Dendritic cell treated with granulocyte-macrophage colony-stimulating factor and Interleukin-4, amounts not matched to agents 40 ng/mL and 50 ng/mL, for 4 days (primary cell): ENCODE measurements at regions of chr16 and their contacts with region 1.

Region 1: GRCh38 chr16:81623363-81624102 is 155.6 kb upstream of the PLCG2 start:
- H3K4me3 Mint-ChIP-seq: no peak overlapping the region
- H3K27ac Mint-ChIP-seq: no peak overlapping the region
- H3K4me1 Mint-ChIP-seq: peaks cover 20% of the 10 kb centered on the region
- H3K27me3 Mint-ChIP-seq: no peaks in the 10 kb centered on the region

Region 2: DNA sequence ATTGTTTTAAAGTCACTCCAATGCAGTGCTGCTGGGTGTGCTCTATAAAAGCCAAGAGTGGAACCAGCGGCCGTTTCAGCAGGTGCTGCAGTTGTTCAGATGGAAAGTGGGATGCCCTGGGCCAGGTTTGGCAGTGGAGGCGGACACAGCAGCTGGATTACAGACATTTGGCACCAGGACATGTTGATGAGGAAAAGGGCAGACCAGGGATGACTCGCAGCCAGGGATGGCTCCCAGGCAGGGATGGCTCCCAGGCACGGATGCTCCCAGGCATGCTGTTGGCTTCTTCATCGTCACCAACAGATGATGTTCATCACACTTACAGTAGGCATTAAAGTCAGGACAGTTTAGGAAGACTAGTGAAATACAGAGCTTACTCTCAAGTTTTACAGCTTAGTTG is 298.7 kb before region 1 on chr16:
- intact Hi-C with region 1: no loop called
- H3K4me3 Mint-ChIP-seq: no peak overlapping the region
- H3K27ac Mint-ChIP-seq: no peak overlapping the region
- H3K4me1 Mint-ChIP-seq: no peaks in the 10 kb centered on the region
- H3K27me3 Mint-ChIP-seq: no peaks in the 10 kb centered on the region

Region 3: GRCh38 chr16:81723098-81723723 is 99.7 kb after region 1 on chr16:
- intact Hi-C with region 1: loop called (anchors 10 kb)
- H3K4me3 Mint-ChIP-seq: no peak overlapping the region
- H3K27ac Mint-ChIP-seq: no peak overlapping the region
- H3K4me1 Mint-ChIP-seq: peaks cover 20% of the 10 kb centered on the region
- H3K27me3 Mint-ChIP-seq: peaks cover 4% of the 10 kb centered on the region

Region 4: DNA sequence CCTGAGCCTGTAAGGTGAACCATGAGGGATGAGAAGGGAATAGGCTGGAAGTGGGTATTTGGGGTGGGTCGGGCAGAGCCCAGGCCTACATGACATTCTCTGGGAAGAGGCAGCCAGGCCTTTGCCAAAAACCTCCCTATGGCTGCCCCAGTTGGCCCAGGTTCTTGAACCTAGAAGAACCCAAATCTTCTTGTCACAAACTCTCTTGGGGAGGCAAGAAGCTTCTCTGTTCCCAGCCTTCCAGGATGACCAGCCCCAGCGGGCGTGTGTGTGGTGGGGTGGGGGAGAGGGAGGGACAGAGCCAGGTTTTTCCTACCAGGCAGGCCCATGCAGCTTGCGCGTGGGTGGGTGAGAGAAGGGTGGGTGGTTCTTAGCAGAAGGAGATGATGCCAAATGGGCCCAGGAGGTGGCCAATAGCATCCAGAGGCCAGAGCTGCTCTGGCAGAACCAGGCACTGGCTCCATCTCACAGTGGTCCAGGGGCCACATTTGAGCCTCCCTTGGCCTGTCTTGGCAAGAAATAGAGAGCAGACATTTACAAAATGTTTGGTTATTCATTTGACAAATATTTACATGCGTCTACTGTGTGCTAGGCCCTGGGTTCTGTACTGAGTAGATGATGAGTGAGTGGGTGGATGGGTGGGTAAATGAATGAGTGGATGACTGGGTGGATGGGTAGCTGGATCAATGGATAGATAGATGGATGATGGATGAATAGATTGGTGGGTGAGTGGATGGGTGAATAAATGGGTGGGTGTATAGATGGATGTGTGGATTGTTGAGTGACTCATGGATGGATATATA is 111.3 kb after region 1 on chr16:
- intact Hi-C with region 1: no loop called
- H3K4me3 Mint-ChIP-seq: no peak overlapping the region
- H3K27ac Mint-ChIP-seq: no peak overlapping the region
- H3K4me1 Mint-ChIP-seq: peaks cover 36% of the 10 kb centered on the region
- H3K27me3 Mint-ChIP-seq: peaks cover 22% of the 10 kb centered on the region

Region 5: DNA sequence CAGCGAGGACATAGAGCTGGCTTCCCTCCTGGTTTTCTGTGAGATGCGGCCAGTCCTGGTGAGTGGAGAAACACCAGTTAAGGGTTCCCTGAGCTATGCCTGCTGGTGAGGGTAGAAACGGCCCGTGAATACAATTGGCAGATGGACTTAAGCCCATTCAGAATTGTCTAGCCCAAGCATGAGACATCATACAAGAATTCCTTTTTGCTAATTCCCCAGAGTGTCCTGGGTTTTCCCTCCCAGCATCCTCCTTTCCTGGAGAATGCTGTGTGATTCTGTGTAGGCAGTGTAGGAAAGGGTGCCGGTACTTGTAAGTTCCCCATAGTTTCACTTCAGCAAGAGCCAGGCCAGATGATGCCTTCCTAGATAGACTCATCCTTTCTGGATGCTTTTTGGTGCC is 322.7 kb after region 1 on chr16:
- intact Hi-C with region 1: no loop called
- H3K4me3 Mint-ChIP-seq: no peak overlapping the region
- H3K27ac Mint-ChIP-seq: no peak overlapping the region
- H3K4me1 Mint-ChIP-seq: peaks cover 1% of the 10 kb centered on the region
- H3K27me3 Mint-ChIP-seq: no peaks in the 10 kb centered on the region